Left ventricle myocardium superior (tissue), 1 donor: ENCODE measurements at regions of chr16 and their contacts with region 1.

Region 1: GRCh38 chr16:55367866-55368603 is 44.0 kb downstream of the IRX6 start:
- DNase-seq: no peak
- ATAC-seq: no peak

Region 2: DNA sequence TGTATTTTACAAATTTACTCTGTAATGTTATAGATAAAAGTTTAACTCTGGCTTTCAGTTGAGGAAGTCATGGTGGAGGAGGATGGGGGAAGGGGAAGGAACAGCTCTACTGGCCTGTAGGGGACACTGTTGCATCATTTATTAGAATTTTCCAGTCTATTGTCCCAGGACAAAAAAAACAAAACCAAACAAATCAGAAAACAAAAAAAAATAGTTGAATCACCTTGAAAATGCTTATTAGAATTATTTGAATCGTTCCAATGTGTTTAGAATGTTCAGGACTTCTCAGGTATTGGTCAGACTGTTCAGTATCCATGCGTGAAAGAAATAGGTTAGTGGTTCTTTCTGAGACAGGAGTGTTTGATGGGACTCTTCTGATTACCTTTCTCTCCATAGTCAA is 1422.0 kb before region 1 on chr16:
- intact Hi-C with region 1: loop called (anchors 10 kb)
- DNase-seq: no peak
- ATAC-seq: peak; percentile 76

Region 3: DNA sequence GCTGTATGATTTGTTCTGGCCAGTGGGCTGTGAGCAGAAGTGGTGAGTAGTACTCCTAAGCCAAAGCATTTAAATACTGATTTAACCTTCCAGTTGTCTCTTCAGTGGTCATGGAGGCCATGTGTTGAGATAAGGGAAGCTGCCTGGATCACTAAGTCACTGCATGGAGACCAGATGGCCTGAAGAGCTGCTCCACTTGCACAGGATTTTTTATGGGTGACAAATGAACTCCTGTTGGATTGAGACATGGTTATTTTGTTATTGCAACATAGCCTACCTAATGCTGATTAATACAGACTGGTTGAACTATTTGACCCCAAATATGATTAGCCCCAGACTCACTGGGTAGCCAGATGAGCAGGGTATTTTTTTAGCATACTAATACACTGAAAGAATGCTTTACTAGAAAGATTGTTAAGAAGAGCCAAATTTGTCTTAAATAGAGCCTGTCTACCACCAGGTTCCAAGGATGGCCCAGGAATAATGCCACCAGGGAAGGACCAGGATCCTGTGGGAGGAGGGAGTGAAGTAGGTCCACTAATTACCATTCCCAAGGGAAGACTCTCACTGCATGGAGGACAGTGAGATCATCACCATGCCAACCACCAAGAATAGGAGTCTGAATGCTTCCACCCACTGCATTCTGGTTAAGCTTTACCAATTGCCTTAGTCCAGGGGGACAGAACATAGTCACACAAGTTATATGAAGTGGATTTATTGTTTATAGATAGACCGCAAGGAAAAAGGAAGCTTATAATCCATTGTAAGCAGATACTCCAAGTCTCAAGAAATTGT is 231.5 kb before region 1 on chr16:
- intact Hi-C with region 1: no loop called
- DNase-seq: no peak
- ATAC-seq: no peak

Region 4: GRCh38 chr16:55465077-55465896 is 97.3 kb after region 1 on chr16:
- intact Hi-C with region 1: no loop called
- DNase-seq: peak; percentile 93
- ATAC-seq: peak; percentile 93

Region 5: DNA sequence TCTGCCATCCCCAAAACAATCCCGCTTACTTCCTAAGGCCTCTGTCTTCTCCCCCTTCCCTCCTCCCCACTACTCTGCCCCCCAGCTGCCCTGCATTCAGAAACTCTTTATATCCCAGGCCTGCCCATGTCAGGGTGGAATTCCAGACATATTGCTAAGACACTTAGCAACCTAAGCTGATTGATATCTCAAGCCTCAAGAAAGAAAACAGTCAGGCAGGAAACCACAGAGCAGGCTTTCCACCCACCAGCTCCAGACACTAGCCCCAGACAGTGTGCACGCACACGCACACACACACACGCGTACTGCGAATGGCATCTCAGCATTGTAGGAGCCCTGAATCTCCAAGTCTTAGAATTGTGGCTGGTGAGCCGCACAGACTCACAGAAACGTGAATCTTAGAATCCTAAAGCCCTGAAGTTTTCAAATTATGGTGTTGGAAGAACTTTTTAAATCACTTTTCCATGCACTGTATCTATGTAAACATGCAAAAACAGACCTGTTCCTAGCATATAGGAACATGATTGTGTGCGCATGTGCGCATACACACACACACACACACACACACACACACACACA is 132.0 kb after region 1 on chr16:
- intact Hi-C with region 1: no loop called
- DNase-seq: no peak
- ATAC-seq: no peak